A549 (cell line): ENCODE measurements at regions of chr5 and their contacts with region 1.

Region 1: DNA sequence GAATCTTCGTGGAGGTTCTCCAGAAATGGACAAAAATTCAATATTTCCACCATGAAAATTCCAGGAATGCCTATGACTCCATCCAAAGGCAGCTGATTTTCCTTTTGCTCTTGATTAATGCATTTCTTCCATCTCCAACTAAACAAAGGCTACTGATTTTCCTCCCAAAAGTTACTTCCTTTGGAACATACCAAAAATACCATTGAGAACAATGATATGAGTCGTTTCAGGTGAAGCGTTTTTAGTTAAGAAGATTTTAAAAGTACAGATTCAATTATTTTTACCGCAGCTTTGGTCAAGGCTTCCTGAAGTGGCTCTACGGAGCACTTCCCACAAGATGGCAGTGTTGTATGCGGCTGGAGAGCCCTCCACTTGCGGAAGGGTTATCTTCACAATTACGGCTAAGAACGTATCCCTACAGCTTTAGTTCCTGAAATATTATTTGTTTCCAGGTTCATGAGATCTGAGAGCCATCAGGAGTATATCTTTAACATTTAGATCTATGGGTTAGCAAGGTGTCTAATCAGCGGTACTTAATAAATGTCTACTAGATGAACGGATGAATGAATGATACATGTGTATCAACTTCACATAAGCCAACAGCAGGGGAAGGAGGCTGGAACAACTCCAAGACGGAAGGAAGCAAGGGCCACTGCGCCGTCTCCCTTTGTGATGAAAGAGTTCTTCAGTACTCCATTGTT is 35.9 kb upstream of the ARSB start:
- DNase-seq: peak; percentile 28 to 66
- ATAC-seq: peak; percentile 88 to 92; a peak in 5 of 6 replicates
- H3K4me3 ChIP-seq: no peak overlapping the region
- H3K27ac ChIP-seq: no peak overlapping the region
- H3K4me1 ChIP-seq: peaks cover 15% of the 10 kb centered on the region; the same call in 2 of the 3 replicates
- CTCF ChIP-seq: peak; percentile 91
- EP300 ChIP-seq: no peak
- POLR2A ChIP-seq: no peak
- RAD21 ChIP-seq: peak; percentile 82 to 86

Region 2: GRCh38 chr5:78841767-78842166 is 179.2 kb before region 1 on chr5:
- CTCF ChIA-PET with region 1: no interaction called
- POLR2A ChIA-PET with region 1: no interaction called
- DNase-seq: no peak
- ATAC-seq: no peak
- H3K4me3 ChIP-seq: no peak overlapping the region
- H3K27ac ChIP-seq: no peak overlapping the region
- H3K4me1 ChIP-seq: no peaks in the 10 kb centered on the region
- CTCF ChIP-seq: no peak
- EP300 ChIP-seq: no peak
- POLR2A ChIP-seq: no peak
- RAD21 ChIP-seq: no peak

Region 3: GRCh38 chr5:79042188-79042587 is 21.2 kb after region 1 on chr5:
- CTCF ChIA-PET with region 1: interaction called, 42 read pairs
- POLR2A ChIA-PET with region 1: no interaction called
- DNase-seq: no peak
- ATAC-seq: no peak
- H3K4me3 ChIP-seq: no peak overlapping the region
- H3K27ac ChIP-seq: no peak overlapping the region
- H3K4me1 ChIP-seq: no peaks in the 10 kb centered on the region
- CTCF ChIP-seq: no peak
- EP300 ChIP-seq: no peak
- POLR2A ChIP-seq: no peak
- RAD21 ChIP-seq: no peak

Region 4: DNA sequence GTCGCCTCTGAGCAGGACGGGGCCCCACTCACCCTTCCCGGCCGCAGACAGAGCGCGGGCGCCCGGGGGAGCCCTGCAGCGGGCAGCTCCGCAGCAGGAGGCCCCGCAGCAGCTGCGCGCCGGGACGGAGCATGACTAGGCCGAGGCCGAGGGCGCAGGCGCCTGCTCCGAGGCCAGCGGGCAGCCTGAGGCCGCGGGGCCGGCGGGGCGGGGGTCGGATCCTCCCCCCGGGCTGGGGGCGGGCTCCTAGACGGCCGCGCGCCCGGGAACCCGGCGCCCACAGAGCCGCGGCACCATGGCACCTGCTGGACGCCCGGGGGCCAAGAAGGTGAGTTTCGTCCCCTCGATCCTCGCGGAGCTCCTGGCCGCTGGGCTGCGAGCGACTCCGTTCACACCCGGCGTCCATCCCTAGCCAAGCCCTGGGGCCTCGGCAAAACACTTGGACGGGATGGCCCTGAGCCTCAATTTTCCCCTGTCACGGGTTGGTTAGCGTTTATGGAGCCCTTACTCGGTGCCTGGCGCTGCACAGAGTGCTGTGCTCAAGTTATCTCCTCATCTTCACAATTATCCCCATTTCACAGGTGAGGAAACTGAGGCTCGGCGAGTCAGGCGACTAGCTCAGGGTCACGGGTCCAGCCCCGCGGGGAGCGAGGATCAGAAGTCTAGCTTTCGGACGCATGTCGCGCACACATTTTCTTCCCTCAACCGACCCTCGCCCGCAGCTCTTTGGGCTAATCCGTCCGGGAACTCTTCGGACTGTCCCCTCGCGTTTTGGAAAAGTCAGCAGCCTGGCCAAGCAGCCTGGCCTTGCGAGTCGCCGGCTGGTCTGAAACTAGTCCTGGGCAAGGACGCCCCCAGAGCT is 48.7 kb after region 1 on chr5 and contains the starts of genes BHMT2 and DMGDH:
- CTCF ChIA-PET with region 1: interaction called, 13 read pairs
- POLR2A ChIA-PET with region 1: no interaction called
- DNase-seq: no peak
- ATAC-seq: no peak
- H3K4me3 ChIP-seq: no peak within 1 kb of the TSS
- H3K27ac ChIP-seq: peak within 1 kb of the TSS in 1 of 2 experiments; percentile 29; a peak in 1 of 6 replicates
- H3K4me1 ChIP-seq: no peaks in the 10 kb centered on the region; the same call in 2 of the 3 replicates
- CTCF ChIP-seq: no peak
- EP300 ChIP-seq: no peak
- POLR2A ChIP-seq: no peak
- RAD21 ChIP-seq: no peak
- polyA plus RNA-seq, gene BHMT2: not detected in 2 replicates
- polyA plus RNA-seq, gene DMGDH: 1.5 and 2.2 TPM in 2 replicates

Region 5: DNA sequence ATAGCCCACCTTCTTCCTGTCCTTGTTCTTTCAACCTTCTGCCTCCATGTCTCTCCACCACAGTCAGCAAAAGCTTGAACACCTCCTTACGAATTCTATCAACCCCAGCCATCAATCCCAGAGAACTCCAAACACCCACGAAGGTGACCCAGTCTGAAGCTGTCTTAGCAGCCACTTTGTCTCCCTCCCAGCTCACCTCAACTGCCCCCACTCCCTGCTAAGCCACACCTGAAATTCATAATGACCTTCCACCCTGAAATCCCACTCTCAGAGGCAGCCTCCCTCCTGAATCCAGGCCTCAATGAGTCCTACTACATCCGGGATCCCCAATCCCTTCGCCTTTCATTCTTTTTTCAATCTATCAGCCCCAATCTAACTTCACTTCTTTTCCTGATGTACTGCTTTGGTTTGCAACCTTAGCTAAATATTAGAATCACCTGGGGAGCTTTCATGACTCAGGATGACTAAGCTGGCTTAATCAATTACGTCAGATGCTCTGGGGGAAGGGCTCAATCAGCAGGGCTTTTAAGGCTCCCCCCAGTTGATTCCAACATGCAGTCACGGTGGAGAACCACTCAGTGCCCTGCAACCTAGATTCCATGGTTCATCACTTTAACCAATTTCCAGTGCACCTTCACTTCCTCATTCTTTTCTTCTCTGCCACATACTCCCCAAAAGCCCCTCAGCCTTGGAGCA is 122.8 kb after region 1 on chr5:
- CTCF ChIA-PET with region 1: interaction called, 10 read pairs
- POLR2A ChIA-PET with region 1: no interaction called
- DNase-seq: peak in 1 of 2 experiments; percentile 55
- ATAC-seq: peak; percentile 30 to 33; a peak in 3 of 6 replicates
- H3K4me3 ChIP-seq: no peak overlapping the region
- H3K27ac ChIP-seq: peak overlapping the region; percentile 45 to 62
- H3K4me1 ChIP-seq: peaks cover 12% of the 10 kb centered on the region
- CTCF ChIP-seq: no peak
- EP300 ChIP-seq: no peak
- POLR2A ChIP-seq: no peak
- RAD21 ChIP-seq: no peak

Region 6: DNA sequence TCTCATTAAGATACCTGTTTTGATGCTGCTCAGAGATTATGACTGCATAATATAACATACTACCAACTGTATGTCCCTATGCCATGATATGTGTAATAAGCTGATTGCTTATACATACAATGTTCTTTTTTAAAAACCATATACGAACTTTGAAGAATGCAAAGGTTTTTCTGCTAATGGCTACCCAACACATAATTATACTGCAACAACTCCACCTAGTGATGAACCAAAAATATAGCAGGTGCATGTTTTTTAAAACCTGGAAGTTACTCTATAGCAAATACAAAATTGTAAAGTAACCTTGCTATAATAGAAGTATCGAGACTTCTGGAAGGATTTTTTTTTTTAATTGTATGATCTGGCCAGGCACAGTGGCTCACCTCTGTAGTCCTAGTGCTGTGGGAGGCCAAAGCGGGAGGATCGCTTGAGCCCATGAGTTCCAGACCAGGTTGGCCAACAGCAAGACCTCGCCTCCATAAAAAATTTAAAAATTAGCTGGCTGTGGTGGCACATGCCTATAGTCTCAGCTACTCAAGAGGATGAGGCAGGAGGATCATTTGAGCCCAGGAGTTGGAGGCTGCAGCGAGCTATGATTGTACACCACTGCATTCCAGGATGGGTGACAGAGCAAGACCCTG is 443.8 kb after region 1 on chr5:
- CTCF ChIA-PET with region 1: interaction called, 146 read pairs
- POLR2A ChIA-PET with region 1: no interaction called
- DNase-seq: peak; percentile 21 to 44
- ATAC-seq: peak; percentile 68 to 73; a peak in 4 of 6 replicates
- H3K4me3 ChIP-seq: no peak overlapping the region
- H3K27ac ChIP-seq: no peak overlapping the region
- H3K4me1 ChIP-seq: no peaks in the 10 kb centered on the region
- CTCF ChIP-seq: peak; percentile 72
- EP300 ChIP-seq: no peak
- POLR2A ChIP-seq: no peak
- RAD21 ChIP-seq: peak; percentile 78 to 79

Region 7: GRCh38 chr5:80083101-80083890 is 1062.3 kb after region 1 on chr5:
- CTCF ChIA-PET with region 1: interaction called, 19 read pairs
- POLR2A ChIA-PET with region 1: no interaction called
- DNase-seq: peak; percentile 74 to 82
- ATAC-seq: peak; percentile 84 to 91
- H3K4me3 ChIP-seq: peak overlapping the region; percentile 38
- H3K27ac ChIP-seq: peak overlapping the region; percentile 11 to 65; a peak in 4 of 6 replicates
- H3K4me1 ChIP-seq: no peaks in the 10 kb centered on the region
- CTCF ChIP-seq: peak; percentile 73
- EP300 ChIP-seq: no peak
- POLR2A ChIP-seq: no peak
- RAD21 ChIP-seq: peak; percentile 67 to 72